Panc1 (cell line): ENCODE measurements at regions of chr11 and their contacts with region 1.

Region 1: DNA sequence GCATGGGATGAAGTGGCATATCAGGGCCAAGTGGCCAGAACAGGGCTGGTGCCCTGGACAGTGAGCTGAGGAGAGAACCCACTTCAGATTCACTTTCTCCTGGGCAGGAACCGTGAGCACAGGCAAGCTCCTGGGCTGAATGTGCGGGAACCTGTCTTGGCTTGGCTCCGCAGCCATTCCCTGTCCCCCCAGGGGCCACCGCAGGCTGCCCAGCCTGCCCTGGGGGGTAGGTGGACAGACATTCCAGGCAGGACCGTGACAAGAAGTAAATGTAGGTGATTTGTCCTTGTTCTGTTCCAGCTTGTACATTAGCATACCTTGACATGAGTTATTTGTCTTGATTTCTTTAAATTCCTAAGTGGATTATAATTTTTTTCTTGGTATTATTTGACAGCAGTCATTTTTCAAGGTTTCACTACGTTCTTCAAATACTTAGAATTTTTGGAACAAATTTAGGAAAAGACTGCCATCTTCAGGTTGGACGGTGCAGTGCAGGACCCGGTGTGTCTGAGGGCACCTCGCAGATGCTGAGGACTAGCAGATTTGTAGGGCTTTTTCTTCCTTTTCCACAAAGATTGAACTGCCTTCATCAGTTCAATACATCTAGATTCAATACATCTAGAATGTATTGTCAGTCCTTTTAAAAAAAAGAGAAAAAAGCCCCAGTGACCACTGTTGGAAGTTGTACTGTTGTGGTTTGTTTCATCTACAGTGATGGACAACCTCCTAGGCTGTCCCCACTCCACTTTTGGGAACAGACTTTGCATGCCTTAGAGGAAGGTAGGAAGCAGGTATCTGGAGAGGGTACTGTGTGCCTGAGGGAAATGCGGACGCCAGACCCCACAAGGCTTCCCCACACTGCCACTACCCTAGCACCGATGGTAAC is 115.1 kb upstream of the RASSF10 start:
- DNase-seq: peak; percentile 13
- ATAC-seq: peak; percentile 81
- H3K4me3 ChIP-seq: no peak overlapping the region
- H3K27ac ChIP-seq: no peak overlapping the region
- H3K4me1 ChIP-seq: no peaks in the 10 kb centered on the region
- H3K27me3 ChIP-seq: no peaks in the 10 kb centered on the region
- CTCF ChIP-seq: peak; percentile 85

Region 2: DNA sequence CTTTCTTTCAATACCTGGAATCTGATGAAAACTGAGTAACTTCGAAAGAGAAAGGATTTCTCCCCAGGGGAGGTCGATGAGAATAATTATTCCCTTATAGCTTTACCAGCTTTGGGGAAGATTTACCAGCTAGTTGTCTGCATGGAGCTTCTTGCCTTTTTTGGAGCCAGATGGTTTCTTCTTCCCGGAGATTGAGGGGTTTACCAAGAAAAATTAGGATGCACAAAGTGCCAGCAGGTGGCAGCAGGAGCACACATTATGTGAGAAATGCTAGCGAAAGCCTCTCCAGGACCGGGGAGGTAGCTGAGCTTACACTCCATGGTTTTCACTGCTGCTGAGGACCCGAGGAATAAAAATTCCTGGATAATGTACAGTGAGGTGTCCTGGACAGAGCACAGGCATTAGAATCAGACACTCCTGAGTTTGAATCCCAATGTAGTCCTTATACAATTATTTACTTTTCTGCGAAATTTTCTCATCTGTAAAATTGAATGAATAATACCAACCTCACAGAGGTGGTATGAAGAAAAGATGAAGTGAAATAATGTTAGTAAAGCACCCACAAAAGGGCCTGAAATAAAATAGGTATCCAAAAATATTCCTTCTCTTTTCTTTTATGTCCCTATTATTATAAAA is 562.7 kb before region 1 on chr11:
- CTCF ChIA-PET with region 1: interaction called, 5 read pairs
- POLR2A ChIA-PET with region 1: no interaction called
- in situ Hi-C with region 1: no loop called
- intact Hi-C with region 1: loop called (anchors 2 kb)
- DNase-seq: peak; percentile 71
- ATAC-seq: peak; percentile 94
- H3K4me3 ChIP-seq: no peak overlapping the region
- H3K27ac ChIP-seq: no peak overlapping the region
- H3K4me1 ChIP-seq: no peaks in the 10 kb centered on the region
- H3K27me3 ChIP-seq: no peaks in the 10 kb centered on the region
- CTCF ChIP-seq: peak; percentile 85

Region 3: GRCh38 chr11:12411806-12412727 is 482.0 kb before region 1 on chr11:
- CTCF ChIA-PET with region 1: no interaction called
- POLR2A ChIA-PET with region 1: no interaction called
- in situ Hi-C with region 1: no loop called
- intact Hi-C with region 1: loop called (anchors 10 kb)
- DNase-seq: no peak
- ATAC-seq: peak; percentile 95
- H3K4me3 ChIP-seq: no peak overlapping the region
- H3K27ac ChIP-seq: peak overlapping the region; percentile 20; the same call in 1 of the 2 replicates
- H3K4me1 ChIP-seq: peaks cover 10% of the 10 kb centered on the region
- H3K27me3 ChIP-seq: no peaks in the 10 kb centered on the region
- CTCF ChIP-seq: peak; percentile 86

Region 4: DNA sequence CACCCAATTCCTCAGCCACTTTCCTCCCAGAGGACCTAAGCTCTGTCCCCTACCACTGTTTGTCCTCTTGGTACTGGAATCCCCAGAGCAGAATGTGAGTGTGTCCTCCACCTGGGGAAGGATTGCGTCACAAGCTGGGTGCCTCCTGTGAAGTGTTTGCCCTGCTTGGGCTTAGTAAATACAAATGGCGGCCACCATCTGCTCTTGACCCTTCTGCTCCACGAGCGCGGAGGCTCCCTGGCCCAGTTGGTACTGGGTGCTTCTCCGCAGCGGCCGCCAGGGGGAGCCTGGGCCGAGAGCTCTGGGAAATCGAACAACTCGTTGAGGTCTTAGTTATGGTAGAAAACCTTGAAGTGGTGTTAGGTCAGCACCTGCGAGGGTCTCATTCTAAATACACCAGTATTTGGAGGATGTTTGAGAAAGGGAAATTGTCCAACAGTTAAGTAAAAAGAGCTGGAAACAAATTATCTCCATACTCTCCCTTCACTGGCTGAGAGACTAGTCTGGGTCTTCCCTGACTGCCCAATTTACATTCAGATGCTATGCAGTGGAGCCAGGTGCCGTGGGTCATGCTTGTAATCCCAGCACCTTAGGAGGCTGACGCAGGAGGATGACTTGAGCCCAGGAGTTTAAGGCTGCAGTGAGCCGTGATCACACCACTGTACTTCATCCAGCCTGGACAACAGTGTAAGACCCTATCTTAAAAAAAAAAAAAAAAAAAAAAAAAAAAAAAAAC is 294.5 kb before region 1 on chr11:
- CTCF ChIA-PET with region 1: interaction called, 6 read pairs
- POLR2A ChIA-PET with region 1: no interaction called
- in situ Hi-C with region 1: no loop called
- intact Hi-C with region 1: loop called (anchors 5 kb)
- DNase-seq: no peak
- ATAC-seq: peak; percentile 95
- H3K4me3 ChIP-seq: no peak overlapping the region
- H3K27ac ChIP-seq: no peak overlapping the region
- H3K4me1 ChIP-seq: no peaks in the 10 kb centered on the region
- H3K27me3 ChIP-seq: no peaks in the 10 kb centered on the region
- CTCF ChIP-seq: peak; percentile 95

Region 5: GRCh38 chr11:12693479-12694181 is 200.4 kb before region 1 on chr11:
- CTCF ChIA-PET with region 1: no interaction called
- POLR2A ChIA-PET with region 1: no interaction called
- in situ Hi-C with region 1: no loop called
- intact Hi-C with region 1: loop called (anchors 5 kb)
- DNase-seq: peak; percentile 93
- ATAC-seq: peak; percentile 82
- H3K4me3 ChIP-seq: peak overlapping the region; percentile 26 to 50
- H3K27ac ChIP-seq: peak overlapping the region; percentile 97
- H3K4me1 ChIP-seq: peaks cover 90% of the 10 kb centered on the region
- H3K27me3 ChIP-seq: no peaks in the 10 kb centered on the region
- CTCF ChIP-seq: no peak

Region 6: DNA sequence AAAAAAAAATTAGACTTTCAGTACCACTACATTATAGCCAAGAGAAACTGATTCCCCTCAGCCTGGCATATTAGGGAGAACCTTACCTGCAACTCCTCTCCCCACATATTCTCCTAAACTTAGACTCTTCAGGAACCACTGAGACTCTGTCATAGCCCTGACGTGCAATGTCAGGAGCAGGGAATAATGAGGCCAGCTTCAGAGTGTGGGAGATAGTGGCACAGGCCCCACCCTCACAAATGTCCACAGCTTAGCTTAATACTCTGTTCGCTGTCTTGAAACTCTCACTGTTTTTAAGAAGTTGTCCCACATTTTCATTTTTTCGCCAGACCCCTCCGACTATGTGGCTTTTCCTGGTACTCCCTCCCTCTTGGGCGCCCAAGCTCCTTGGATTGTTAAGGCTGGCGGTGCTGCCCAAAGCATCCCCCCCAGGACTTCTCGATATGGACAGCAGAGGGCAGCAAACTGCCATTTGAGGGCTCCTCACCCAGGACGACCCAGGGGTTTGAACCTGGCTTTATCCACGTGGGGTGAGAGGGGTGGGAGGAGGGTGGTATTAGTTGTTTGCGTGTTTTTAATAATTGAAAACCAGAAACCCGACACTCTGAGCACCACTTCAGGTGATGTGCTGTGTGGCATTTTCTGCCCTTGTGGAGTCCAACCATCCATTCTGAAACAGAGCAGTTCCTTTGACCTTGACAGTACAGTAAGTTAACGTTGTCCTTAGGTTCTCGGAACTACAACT is 69.9 kb after region 1 on chr11:
- CTCF ChIA-PET with region 1: no interaction called
- POLR2A ChIA-PET with region 1: no interaction called
- in situ Hi-C with region 1: no loop called
- intact Hi-C with region 1: no loop called
- DNase-seq: no peak
- ATAC-seq: peak; percentile 98
- H3K4me3 ChIP-seq: no peak overlapping the region
- H3K27ac ChIP-seq: no peak overlapping the region
- H3K4me1 ChIP-seq: no peaks in the 10 kb centered on the region
- H3K27me3 ChIP-seq: peaks cover 8% of the 10 kb centered on the region; the same call in 1 of the 2 replicates
- CTCF ChIP-seq: peak; percentile 89